HAP-1 (cell line): ENCODE measurements at regions of chr1 and their contacts with region 1.

Region 1: GRCh38 chr1:231584921-231585320 is 41.7 kb upstream of the DISC1 start:
- DNase-seq: no peak
- H3K4me3 ChIP-seq: no peak overlapping the region
- H3K4me1 ChIP-seq: peaks cover 7% of the 10 kb centered on the region; the same call in 1 of the 2 replicates
- H3K27me3 ChIP-seq: no peaks in the 10 kb centered on the region

Region 2: DNA sequence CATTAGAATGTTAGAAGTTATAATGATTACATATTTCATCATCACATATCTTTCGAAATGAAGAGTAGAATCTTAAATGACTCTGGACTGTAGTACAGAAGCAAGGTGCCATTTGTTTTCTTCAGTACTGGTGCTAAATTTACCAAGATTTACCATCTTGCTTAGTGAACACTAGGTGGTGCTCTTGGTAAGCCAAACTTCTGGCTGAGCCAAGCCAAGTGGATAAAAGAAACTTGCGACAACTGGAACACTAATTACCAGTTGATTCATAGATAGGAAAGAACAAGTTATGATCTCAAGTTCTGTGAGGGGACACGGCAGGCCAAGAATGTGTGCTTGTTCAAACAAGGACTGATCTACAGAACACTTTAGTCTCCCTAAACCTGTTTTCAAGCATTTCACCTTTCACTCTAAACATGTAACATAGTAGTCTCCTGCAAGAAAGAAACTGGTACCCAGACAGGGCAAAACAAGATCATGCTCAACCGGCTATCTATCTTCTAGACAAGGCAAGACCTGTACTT is 227.0 kb before region 1 on chr1:
- in situ Hi-C with region 1: loop called (anchors 5 kb)
- DNase-seq: peak; percentile 47 to 77
- H3K4me3 ChIP-seq: no peak overlapping the region
- H3K4me1 ChIP-seq: peaks cover 8% of the 10 kb centered on the region
- H3K27me3 ChIP-seq: no peaks in the 10 kb centered on the region

Region 3: DNA sequence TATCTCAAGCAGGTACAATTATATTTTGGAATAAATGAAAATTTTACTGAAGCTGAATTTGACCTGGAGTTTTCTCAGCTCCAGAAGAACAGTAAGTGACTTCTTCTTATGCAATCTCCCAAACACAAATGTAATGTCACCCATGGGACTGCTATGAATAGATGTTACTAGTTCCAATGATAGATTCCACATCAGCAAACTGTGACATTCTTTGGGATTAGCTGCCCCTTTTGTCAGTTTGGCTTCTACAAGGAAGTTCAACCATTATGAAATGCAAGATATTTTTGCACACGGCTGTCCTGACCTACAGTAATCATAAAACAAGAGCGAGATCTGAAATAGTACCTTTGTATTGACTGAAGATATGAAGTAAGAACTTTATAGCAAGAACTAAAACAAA is 84.3 kb before region 1 on chr1:
- in situ Hi-C with region 1: no loop called
- DNase-seq: no peak
- H3K4me3 ChIP-seq: no peak overlapping the region
- H3K4me1 ChIP-seq: no peaks in the 10 kb centered on the region
- H3K27me3 ChIP-seq: no peaks in the 10 kb centered on the region

Region 4: GRCh38 chr1:231973830-231974229 is 388.9 kb after region 1 on chr1:
- in situ Hi-C with region 1: no loop called
- DNase-seq: no peak
- H3K4me3 ChIP-seq: no peak overlapping the region
- H3K4me1 ChIP-seq: peaks cover 12% of the 10 kb centered on the region
- H3K27me3 ChIP-seq: no peaks in the 10 kb centered on the region